Naive thymus-derived CD4-positive, alpha-beta T cell (primary cell): ENCODE measurements at regions of chr11 and their contacts with region 1.

Region 1: DNA sequence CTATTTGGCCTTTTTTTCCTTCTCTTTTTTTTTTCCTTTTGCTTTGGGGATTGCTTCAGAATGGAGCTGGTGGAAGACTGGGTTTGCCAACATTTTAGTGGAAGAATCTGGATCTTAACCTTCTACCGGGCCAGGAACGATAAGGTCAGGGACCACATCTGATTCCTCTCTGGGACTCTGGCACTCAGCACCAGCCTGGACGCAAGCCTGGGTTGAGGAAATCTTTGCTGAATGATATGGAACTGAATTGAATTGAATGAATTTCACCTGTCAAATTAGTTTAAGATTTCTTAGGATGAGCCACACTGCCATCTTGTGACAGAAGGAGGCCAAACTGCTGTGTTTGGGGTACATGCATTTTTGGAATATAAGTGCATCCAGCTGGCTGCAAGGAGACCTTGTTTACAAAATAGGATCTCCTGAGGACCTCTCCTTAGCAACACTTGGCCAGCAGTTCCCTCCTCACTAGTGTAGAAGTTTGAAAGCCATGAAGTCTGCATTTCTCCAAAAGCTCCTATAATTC is 30.4 kb downstream of the TPBGL start:
- DNase-seq: peak in 7 of 9 donors; percentile 13 to 50 (median 44)
- ATAC-seq: no peak
- H3K4me3 ChIP-seq: no peak overlapping the region
- H3K4me3 Mint-ChIP-seq: peak overlapping the region in 3 of 10 donors; percentile 6 to 47 (median 45)
- H3K27ac ChIP-seq: no peak overlapping the region
- H3K27ac Mint-ChIP-seq: peak overlapping the region in 8 of 9 donors; percentile 82 to 99 (median 94)
- H3K4me1 ChIP-seq: peaks cover 22 to 36% of the 10 kb centered on the region in 2 donors
- H3K4me1 Mint-ChIP-seq: peaks cover 24 to 57% (median 41%) of the 10 kb centered on the region in 7 donors
- H3K27me3 ChIP-seq: no peaks in the 10 kb centered on the region
- H3K27me3 Mint-ChIP-seq: no peaks in the 10 kb centered on the region

Region 2: DNA sequence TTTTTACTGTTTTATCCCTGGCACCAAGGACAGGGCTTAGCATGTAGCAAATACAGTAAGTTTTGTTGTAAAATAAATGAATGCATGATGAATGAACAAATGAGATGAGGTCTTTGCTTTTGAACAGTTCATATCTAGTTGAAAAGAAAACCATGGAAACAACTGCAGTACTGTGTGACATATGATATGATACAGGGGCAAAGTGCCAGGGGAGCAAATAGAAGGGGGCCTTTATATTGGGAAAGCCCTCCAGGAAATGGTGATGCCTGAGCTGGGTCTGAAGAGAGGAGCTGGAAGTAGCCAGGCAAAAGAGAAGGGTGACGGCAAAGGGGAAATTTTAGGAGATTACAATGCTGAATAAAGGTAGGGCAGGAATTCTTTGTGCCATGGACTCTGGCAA is 1198.2 kb before region 1 on chr11:
- CTCF ChIA-PET with region 1: no interaction called
- POLR2A ChIA-PET with region 1: no interaction called
- intact Hi-C with region 1: no loop called
- DNase-seq: no peak
- ATAC-seq: no peak
- H3K4me3 ChIP-seq: no peak overlapping the region
- H3K4me3 Mint-ChIP-seq: no peak overlapping the region
- H3K27ac ChIP-seq: no peak overlapping the region
- H3K27ac Mint-ChIP-seq: no peak overlapping the region
- H3K4me1 ChIP-seq: no peaks in the 10 kb centered on the region
- H3K4me1 Mint-ChIP-seq: peaks cover 0 to 11% (median 2%) of the 10 kb centered on the region in 7 donors
- H3K27me3 ChIP-seq: no peaks in the 10 kb centered on the region
- H3K27me3 Mint-ChIP-seq: no peaks in the 10 kb centered on the region

Region 3: GRCh38 chr11:75022759-75023396 is 248.1 kb before region 1 on chr11:
- CTCF ChIA-PET with region 1: interaction called, 10 read pairs
- POLR2A ChIA-PET with region 1: no interaction called
- intact Hi-C with region 1: loop called in 1 of 2 experiments (anchors 1 kb)
- DNase-seq: peak; percentile 38 to 71 (median 66)
- ATAC-seq: peak; percentile 88
- H3K4me3 ChIP-seq: no peak overlapping the region
- H3K4me3 Mint-ChIP-seq: no peak overlapping the region
- H3K27ac ChIP-seq: no peak overlapping the region
- H3K27ac Mint-ChIP-seq: no peak overlapping the region
- H3K4me1 ChIP-seq: no peaks in the 10 kb centered on the region
- H3K4me1 Mint-ChIP-seq: no peaks in the 10 kb centered on the region
- H3K27me3 ChIP-seq: no peaks in the 10 kb centered on the region
- H3K27me3 Mint-ChIP-seq: no peaks in the 10 kb centered on the region

Region 4: DNA sequence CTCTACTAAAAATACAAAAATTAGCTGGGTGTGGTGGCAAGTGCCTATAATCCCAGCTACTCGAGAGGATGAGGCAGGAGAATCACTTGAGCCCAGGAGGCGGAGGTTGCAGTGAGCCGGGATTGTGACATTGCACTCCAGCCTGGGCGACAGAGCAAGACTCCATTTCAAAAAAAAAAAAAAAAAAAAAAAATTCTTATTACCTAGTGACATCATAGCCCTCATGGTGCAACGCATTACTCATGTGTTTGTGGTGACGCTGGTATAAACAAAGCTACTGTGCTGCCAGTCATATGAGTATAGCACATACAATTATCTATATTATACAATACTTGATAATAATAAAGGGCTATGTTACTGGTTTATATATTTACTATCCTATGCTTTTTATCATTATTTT is 215.5 kb before region 1 on chr11:
- CTCF ChIA-PET with region 1: no interaction called
- POLR2A ChIA-PET with region 1: no interaction called
- intact Hi-C with region 1: no loop called
- DNase-seq: no peak
- ATAC-seq: no peak
- H3K4me3 ChIP-seq: no peak overlapping the region
- H3K4me3 Mint-ChIP-seq: no peak overlapping the region
- H3K27ac ChIP-seq: no peak overlapping the region
- H3K27ac Mint-ChIP-seq: no peak overlapping the region
- H3K4me1 ChIP-seq: no peaks in the 10 kb centered on the region
- H3K4me1 Mint-ChIP-seq: peaks cover 0 to 1% (median 0%) of the 10 kb centered on the region in 7 donors
- H3K27me3 ChIP-seq: no peaks in the 10 kb centered on the region
- H3K27me3 Mint-ChIP-seq: peaks cover 12 to 27% (median 21%) of the 10 kb centered on the region in 5 donors

Region 5: GRCh38 chr11:75241036-75241905 is 29.7 kb before region 1 on chr11:
- CTCF ChIA-PET with region 1: interaction called, 83 read pairs
- POLR2A ChIA-PET with region 1: interaction called, 10 read pairs
- intact Hi-C with region 1: loop called in 1 of 2 experiments (anchors 1 kb)
- DNase-seq: peak; percentile 71 to 95 (median 86)
- ATAC-seq: peak; percentile 98
- H3K4me3 ChIP-seq: peak overlapping the region; percentile 54
- H3K4me3 Mint-ChIP-seq: peak overlapping the region; percentile 59 to 85 (median 75)
- H3K27ac ChIP-seq: no peak overlapping the region
- H3K27ac Mint-ChIP-seq: no peak overlapping the region
- H3K4me1 ChIP-seq: peaks cover 5 to 15% of the 10 kb centered on the region in 2 donors
- H3K4me1 Mint-ChIP-seq: peaks cover 0 to 14% (median 10%) of the 10 kb centered on the region in 7 donors
- H3K27me3 ChIP-seq: peaks cover 3 to 5% of the 10 kb centered on the region in 2 donors
- H3K27me3 Mint-ChIP-seq: peaks cover 13 to 68% (median 27%) of the 10 kb centered on the region in 5 donors

Region 6: GRCh38 chr11:75328426-75329277 is 57.7 kb after region 1 on chr11:
- CTCF ChIA-PET with region 1: interaction called, 92 read pairs
- POLR2A ChIA-PET with region 1: interaction called, 17 read pairs
- intact Hi-C with region 1: no loop called
- DNase-seq: peak in 8 of 9 donors; percentile 44 to 82 (median 66)
- ATAC-seq: peak; percentile 92
- H3K4me3 ChIP-seq: no peak overlapping the region
- H3K4me3 Mint-ChIP-seq: peak overlapping the region; percentile 9 to 75 (median 68)
- H3K27ac ChIP-seq: peak overlapping the region; percentile 58
- H3K27ac Mint-ChIP-seq: peak overlapping the region; percentile 79 to 96 (median 91)
- H3K4me1 ChIP-seq: peaks cover 16 to 54% of the 10 kb centered on the region in 2 donors
- H3K4me1 Mint-ChIP-seq: peaks cover 47 to 88% (median 80%) of the 10 kb centered on the region in 7 donors
- H3K27me3 ChIP-seq: no peaks in the 10 kb centered on the region
- H3K27me3 Mint-ChIP-seq: no peaks in the 10 kb centered on the region

Region 7: DNA sequence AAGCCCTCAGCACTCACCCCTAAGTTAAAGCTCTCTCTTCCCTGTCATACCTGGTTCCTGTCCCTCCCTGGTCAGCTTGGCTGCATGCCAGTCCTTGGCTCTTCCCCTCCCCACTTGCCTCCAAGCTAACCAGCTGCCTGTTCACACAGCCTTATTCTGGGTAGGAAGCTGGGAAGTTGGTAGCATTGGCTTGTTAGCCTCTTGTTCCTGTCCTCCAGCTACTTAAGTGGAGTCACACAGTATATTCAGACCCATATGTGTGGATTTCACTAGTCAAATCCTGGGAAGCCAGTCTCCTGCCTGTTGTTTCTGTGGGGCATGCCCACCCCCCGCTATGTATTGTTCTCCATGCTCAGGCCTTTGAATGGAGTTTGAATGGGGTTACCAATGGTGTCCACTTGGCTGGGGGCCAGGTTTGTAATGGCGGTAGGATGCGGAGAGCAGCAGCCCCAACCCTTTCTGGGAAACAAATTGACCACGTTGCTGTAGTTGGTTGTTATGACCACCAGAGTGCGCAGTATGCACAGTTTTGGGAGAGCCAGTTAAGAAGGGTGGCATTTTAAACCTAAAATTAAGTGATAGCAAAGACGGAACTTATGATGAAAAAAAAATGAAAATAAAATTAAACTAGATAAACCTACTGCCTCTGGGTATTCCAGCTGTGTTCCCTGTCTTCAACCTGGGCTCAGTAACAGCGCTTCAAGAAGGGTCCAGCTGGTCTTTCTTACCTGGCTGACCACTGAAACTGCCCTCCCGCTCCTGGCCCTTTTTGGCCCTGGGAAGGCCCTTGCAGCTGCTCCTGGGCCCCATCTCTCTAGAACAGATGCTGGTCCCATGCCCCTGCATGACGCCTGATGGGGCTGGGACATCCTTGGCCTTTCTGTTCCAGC is 117.7 kb after region 1 on chr11:
- CTCF ChIA-PET with region 1: interaction called, 416 read pairs
- POLR2A ChIA-PET with region 1: interaction called, 119 read pairs
- intact Hi-C with region 1: loop called in 1 of 2 experiments (anchors 1 kb)
- DNase-seq: peak; percentile 23 to 74 (median 64)
- ATAC-seq: peak; percentile 92
- H3K4me3 ChIP-seq: no peak overlapping the region
- H3K4me3 Mint-ChIP-seq: no peak overlapping the region
- H3K27ac ChIP-seq: no peak overlapping the region
- H3K27ac Mint-ChIP-seq: no peak overlapping the region
- H3K4me1 ChIP-seq: peaks cover 5 to 10% of the 10 kb centered on the region in 2 donors
- H3K4me1 Mint-ChIP-seq: peaks cover 10 to 13% (median 12%) of the 10 kb centered on the region in 7 donors
- H3K27me3 ChIP-seq: no peaks in the 10 kb centered on the region
- H3K27me3 Mint-ChIP-seq: peaks cover 0 to 22% (median 0%) of the 10 kb centered on the region in 5 donors

Region 8: GRCh38 chr11:75525596-75526541 is 254.9 kb after region 1 on chr11 and contains the start of gene GDPD5:
- CTCF ChIA-PET with region 1: no interaction called
- POLR2A ChIA-PET with region 1: interaction called, 3 read pairs
- intact Hi-C with region 1: loop called in 1 of 2 experiments (anchors 5 kb)
- DNase-seq: peak; percentile 86 to 97 (median 91)
- ATAC-seq: peak; percentile 99
- H3K4me3 ChIP-seq: peak within 1 kb of the TSS; percentile 61
- H3K4me3 Mint-ChIP-seq: peak within 1 kb of the TSS; percentile 71 to 90 (median 84)
- H3K27ac ChIP-seq: peak within 1 kb of the TSS; percentile 71
- H3K27ac Mint-ChIP-seq: peak within 1 kb of the TSS; percentile 41 to 89 (median 74)
- H3K4me1 ChIP-seq: peaks cover 0 to 16% of the 10 kb centered on the region in 2 donors
- H3K4me1 Mint-ChIP-seq: peaks cover 10 to 37% (median 29%) of the 10 kb centered on the region in 7 donors
- H3K27me3 ChIP-seq: no peaks in the 10 kb centered on the region
- H3K27me3 Mint-ChIP-seq: peaks cover 0 to 24% (median 0%) of the 10 kb centered on the region in 5 donors
- total RNA-seq, gene GDPD5: 18.0 to 50.3 (median 24.7) TPM